SK-N-SH (cell line): ENCODE measurements at regions of chr11 and their contacts with region 1.

Region 1: GRCh38 chr11:119323538-119324033 is 6.7 kb upstream of the MCAM start:
- DNase-seq: peak; percentile 86
- H3K4me3 ChIP-seq: peak overlapping the region in 1 of 2 experiments; percentile 31; a peak in 1 of 4 replicates
- H3K27ac ChIP-seq: no peak overlapping the region
- H3K4me1 ChIP-seq: peaks cover 0 to 11% of the 10 kb centered on the region in 2 experiments; a peak in 1 of 4 replicates
- H3K27me3 ChIP-seq: no peaks in the 10 kb centered on the region
- CTCF ChIP-seq: peak; percentile 83
- EP300 ChIP-seq: peak in 1 of 2 experiments; percentile 69; a peak in 2 of 4 replicates
- RAD21 ChIP-seq: peak; percentile 85

Region 2: GRCh38 chr11:119095066-119095880 is 228.3 kb before region 1 on chr11:
- CTCF ChIA-PET with region 1: interaction called, 20 read pairs
- POLR2A ChIA-PET with region 1: interaction called, 3 read pairs
- DNase-seq: peak; percentile 96
- H3K4me3 ChIP-seq: peak overlapping the region; percentile 84 to 87
- H3K27ac ChIP-seq: peak overlapping the region; percentile 72 to 89
- H3K4me1 ChIP-seq: peaks cover 22 to 24% of the 10 kb centered on the region in 2 experiments; a peak in 3 of 4 replicates
- H3K27me3 ChIP-seq: no peaks in the 10 kb centered on the region
- CTCF ChIP-seq: 0 out of 2 replicates have a peak, but pooled peaks have one; percentile 14
- EP300 ChIP-seq: peak in 1 of 2 experiments; percentile 57; a peak in 1 of 4 replicates
- RAD21 ChIP-seq: peak; percentile 31

Region 3: DNA sequence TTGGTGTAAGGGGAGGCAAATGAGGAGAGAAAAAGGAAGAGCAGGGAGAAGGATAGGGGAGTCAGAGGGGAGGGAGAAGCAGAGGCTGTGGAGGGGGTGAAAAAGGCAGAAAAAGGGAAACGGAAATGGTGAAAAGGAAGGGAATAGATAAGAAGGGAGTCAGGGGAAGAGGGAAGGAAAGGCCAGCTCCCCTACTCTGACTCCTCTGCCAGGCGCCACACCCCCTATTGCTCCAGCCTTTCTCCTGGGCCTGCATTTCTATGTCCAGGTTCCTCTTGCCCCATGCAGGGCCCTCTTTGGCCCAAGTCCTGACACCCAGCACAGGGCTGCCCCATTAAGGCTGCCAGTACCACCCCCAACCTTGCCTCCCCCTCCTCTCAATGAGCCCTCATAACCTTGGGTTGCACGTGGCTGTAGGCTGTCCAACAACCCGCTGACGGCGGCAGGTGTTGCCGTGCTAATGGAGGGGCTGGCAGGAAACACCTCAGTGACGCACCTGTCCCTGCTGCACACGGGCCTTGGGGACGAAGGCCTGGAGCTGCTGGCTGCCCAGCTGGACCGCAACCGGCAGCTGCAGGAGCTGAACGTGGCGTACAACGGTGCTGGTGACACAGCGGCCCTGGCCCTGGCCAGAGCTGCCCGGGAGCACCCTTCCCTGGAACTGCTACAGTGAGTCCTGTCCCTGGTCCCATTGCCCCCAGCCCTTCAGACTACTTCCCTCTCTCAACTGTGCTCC is 141.7 kb before region 1 on chr11:
- CTCF ChIA-PET with region 1: interaction called, 12 read pairs
- POLR2A ChIA-PET with region 1: no interaction called
- DNase-seq: no peak
- H3K4me3 ChIP-seq: no peak overlapping the region
- H3K27ac ChIP-seq: no peak overlapping the region
- H3K4me1 ChIP-seq: peaks cover 0 to 9% of the 10 kb centered on the region in 2 experiments; a peak in 1 of 4 replicates
- H3K27me3 ChIP-seq: no peaks in the 10 kb centered on the region
- CTCF ChIP-seq: no peak
- EP300 ChIP-seq: no peak
- RAD21 ChIP-seq: no peak

Region 4: DNA sequence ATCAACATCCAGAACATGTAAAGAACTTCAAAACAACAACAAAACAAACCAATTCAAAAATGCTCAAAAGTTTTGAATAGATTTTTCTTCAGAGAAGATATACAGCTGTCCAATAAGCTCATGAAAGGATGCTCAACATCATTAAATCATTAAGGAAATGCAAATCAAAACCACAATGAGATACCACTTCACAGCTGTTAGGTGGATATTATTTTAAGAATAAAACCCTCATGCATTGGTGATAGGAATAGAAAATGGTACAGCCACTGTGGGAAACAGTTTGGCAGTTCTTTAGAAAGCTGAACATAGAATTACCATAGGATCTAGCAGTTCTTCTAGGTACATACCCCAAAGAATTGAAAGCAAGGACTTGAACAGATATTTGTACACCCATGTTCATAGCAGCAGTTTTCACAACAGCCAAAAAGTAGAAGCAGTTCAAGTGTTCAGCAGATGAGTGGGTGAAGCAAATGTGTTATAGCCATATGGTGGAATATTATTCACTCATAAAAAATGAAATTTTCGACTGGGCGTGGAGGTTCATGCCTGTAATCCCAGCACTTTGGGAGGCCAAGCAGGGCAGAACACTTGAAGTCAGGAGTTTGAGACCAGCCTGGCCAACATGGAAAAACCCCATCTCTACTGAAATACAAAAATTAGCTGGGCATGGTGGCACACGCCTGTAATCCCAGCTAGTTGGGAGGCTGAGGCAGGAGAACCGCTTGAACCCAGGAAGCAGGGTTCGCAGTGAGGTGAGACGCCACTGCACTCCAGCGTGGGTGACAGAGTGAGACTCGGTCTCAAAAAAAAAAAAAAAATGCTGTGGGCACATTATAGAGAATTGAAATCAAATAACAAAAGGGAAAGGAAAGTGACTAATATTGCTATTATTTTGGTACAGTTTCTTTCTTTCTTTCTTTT is 74.6 kb before region 1 on chr11:
- CTCF ChIA-PET with region 1: no interaction called
- POLR2A ChIA-PET with region 1: no interaction called
- DNase-seq: no peak
- H3K4me3 ChIP-seq: no peak overlapping the region
- H3K27ac ChIP-seq: no peak overlapping the region
- H3K4me1 ChIP-seq: no peaks in the 10 kb centered on the region
- H3K27me3 ChIP-seq: no peaks in the 10 kb centered on the region
- CTCF ChIP-seq: no peak
- EP300 ChIP-seq: no peak
- RAD21 ChIP-seq: no peak

Region 5: GRCh38 chr11:119273721-119274120 is 49.9 kb before region 1 on chr11:
- CTCF ChIA-PET with region 1: interaction called, 16 read pairs
- POLR2A ChIA-PET with region 1: no interaction called
- DNase-seq: no peak
- H3K4me3 ChIP-seq: no peak overlapping the region
- H3K27ac ChIP-seq: no peak overlapping the region
- H3K4me1 ChIP-seq: no peaks in the 10 kb centered on the region
- H3K27me3 ChIP-seq: no peaks in the 10 kb centered on the region
- CTCF ChIP-seq: no peak
- EP300 ChIP-seq: no peak
- RAD21 ChIP-seq: no peak

Region 6: GRCh38 chr11:119306373-119306890 is 17.2 kb before region 1 on chr11:
- CTCF ChIA-PET with region 1: interaction called, 13 read pairs
- POLR2A ChIA-PET with region 1: no interaction called
- DNase-seq: no peak
- H3K4me3 ChIP-seq: no peak overlapping the region
- H3K27ac ChIP-seq: no peak overlapping the region; a peak in 1 of 4 replicates
- H3K4me1 ChIP-seq: no peaks in the 10 kb centered on the region
- H3K27me3 ChIP-seq: no peaks in the 10 kb centered on the region
- CTCF ChIP-seq: no peak
- EP300 ChIP-seq: no peak
- RAD21 ChIP-seq: no peak

Region 7: GRCh38 chr11:119373921-119374631 is 50.5 kb after region 1 on chr11:
- CTCF ChIA-PET with region 1: interaction called, 22 read pairs
- POLR2A ChIA-PET with region 1: no interaction called
- DNase-seq: peak; percentile 84
- H3K4me3 ChIP-seq: peak overlapping the region in 1 of 2 experiments; percentile 27; a peak in 2 of 4 replicates
- H3K27ac ChIP-seq: peak overlapping the region in 1 of 2 experiments; percentile 98; a peak in 2 of 4 replicates
- H3K4me1 ChIP-seq: peaks cover 9 to 94% of the 10 kb centered on the region in 2 experiments
- H3K27me3 ChIP-seq: no peaks in the 10 kb centered on the region
- CTCF ChIP-seq: peak; percentile 88
- EP300 ChIP-seq: peak in 1 of 2 experiments; percentile 26; a peak in 1 of 4 replicates
- RAD21 ChIP-seq: peak; percentile 96